ENCODE measurements at regions of chr4 and their contacts with region 1.

Region 1: GRCh38 chr4:81412946-81413495 is 58.7 kb downstream of the RASGEF1B start:
- DNase-seq: no peak
- ATAC-seq: no peak
- H3K4me3 ChIP-seq: no peak overlapping the region
- H3K27ac ChIP-seq: no peak overlapping the region
- H3K4me1 ChIP-seq: no peaks in the 10 kb centered on the region
- H3K27me3 ChIP-seq: no peaks in the 10 kb centered on the region
- CTCF ChIP-seq: no peak

Region 2: GRCh38 chr4:81214881-81215868 is 197.8 kb before region 1 on chr4 and contains the start of gene PRKG2:
- intact Hi-C with region 1: no loop called
- DNase-seq: peak in 1 of 2 donors; percentile 13
- ATAC-seq: peak in 3 of 8 donors; percentile 17 to 45 (median 25)
- H3K4me3 ChIP-seq: peak within 1 kb of the TSS in 9 of 10 donors; percentile 11 to 41 (median 30)
- H3K27ac ChIP-seq: no peak within 1 kb of the TSS
- H3K4me1 ChIP-seq: peaks cover 0 to 10% (median 0%) of the 10 kb centered on the region in 9 donors
- H3K27me3 ChIP-seq: peaks cover 0 to 69% (median 36%) of the 10 kb centered on the region in 7 donors
- CTCF ChIP-seq: no peak
- total RNA-seq, gene PRKG2: 0.17 to 0.51 (median 0.20) TPM in 3 of 10 donors, not detected in the others

Region 3: GRCh38 chr4:81392164-81392563 is 20.9 kb before region 1 on chr4:
- intact Hi-C with region 1: no loop called
- DNase-seq: no peak
- ATAC-seq: no peak
- H3K4me3 ChIP-seq: no peak overlapping the region
- H3K27ac ChIP-seq: no peak overlapping the region
- H3K4me1 ChIP-seq: no peaks in the 10 kb centered on the region
- H3K27me3 ChIP-seq: no peaks in the 10 kb centered on the region
- CTCF ChIP-seq: no peak

Region 4: DNA sequence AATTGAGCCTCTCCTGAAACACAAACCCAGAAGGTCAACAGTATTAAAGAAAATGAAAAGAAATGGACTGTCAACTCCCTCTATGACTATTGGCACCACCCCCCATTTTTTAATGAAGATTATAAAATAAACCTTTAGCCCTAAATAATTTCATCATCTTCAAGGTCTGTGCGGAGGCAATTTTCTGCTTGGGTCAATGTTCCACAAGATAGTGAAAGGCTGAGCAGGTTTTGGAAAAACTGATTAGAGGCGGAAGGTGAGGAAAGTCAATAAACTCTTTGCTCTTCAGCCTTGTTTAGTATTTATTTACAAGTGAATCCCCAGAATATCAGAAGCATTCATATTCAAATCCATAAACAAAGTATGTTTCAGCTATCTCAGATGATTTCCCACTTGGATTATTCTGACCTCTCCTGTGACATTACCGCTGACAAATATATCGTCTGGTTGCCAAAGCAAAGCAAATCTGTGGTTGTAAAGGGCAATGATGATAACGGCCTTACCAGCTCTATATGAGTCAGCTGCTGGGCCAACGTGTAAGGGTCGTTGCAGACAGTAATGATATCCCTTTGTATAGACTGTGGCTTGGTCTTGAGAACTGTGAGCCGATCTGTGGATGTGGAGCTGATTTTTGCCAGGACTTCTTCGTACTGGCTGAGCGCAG is 34.7 kb after region 1 on chr4:
- intact Hi-C with region 1: loop called in 1 of 10 experiments (anchors 5 kb)
- DNase-seq: no peak
- ATAC-seq: peak in 1 of 8 donors; percentile 70
- H3K4me3 ChIP-seq: no peak overlapping the region
- H3K27ac ChIP-seq: peak overlapping the region in 2 of 10 donors; percentile 27 to 31
- H3K4me1 ChIP-seq: peaks cover 0 to 8% (median 0%) of the 10 kb centered on the region in 9 donors
- H3K27me3 ChIP-seq: no peaks in the 10 kb centered on the region
- CTCF ChIP-seq: no peak

Region 5: GRCh38 chr4:82268050-82268825 is 855.2 kb after region 1 on chr4:
- intact Hi-C with region 1: loop called in 6 of 10 experiments (anchors 5 to 10 kb)
- DNase-seq: peak; percentile 23 to 51
- ATAC-seq: peak; percentile 80 to 96 (median 94)
- H3K4me3 ChIP-seq: peak overlapping the region in 2 of 10 donors; percentile 10 to 13
- H3K27ac ChIP-seq: peak overlapping the region in 2 of 10 donors; percentile 14 to 50
- H3K4me1 ChIP-seq: peaks cover 0 to 14% (median 0%) of the 10 kb centered on the region in 9 donors
- H3K27me3 ChIP-seq: peaks cover 0 to 5% (median 0%) of the 10 kb centered on the region in 7 donors
- CTCF ChIP-seq: peak; percentile 43 to 81 (median 76)